ENCODE measurements at regions of chr6 and their contacts with region 1.

Region 1: DNA sequence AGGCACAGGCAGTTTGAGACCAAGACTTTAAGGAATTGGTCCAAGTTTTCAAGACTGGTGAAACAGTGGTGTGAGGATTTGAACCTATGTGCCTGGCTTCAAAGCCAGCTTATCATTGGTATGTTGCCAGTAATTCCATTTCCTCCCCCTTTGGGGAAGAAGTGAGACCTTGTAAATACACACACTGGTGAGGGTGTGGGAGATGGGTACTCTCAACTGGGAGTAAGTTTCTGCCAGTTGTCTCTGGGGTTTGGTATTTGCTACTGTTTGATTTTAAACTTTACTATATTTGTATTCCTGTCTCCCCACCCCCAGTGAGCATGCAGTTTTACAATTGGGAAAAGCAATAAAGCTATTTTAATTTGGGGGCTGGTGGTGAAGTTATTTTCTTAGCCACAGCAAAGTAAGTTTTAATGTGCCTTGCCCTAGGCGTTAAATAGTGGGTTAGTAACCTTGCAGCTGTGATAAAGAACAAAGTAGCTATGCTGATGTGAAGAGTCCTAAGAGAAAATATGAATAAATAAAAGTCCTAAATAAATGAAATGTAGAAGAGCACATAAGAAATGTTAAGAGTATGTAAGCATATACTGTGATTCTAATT is 31.0 kb downstream of the SNX9 start:
- DNase-seq: no peak
- H3K4me3 ChIP-seq: no peak overlapping the region
- H3K27me3 ChIP-seq: no peaks in the 10 kb centered on the region
- CTCF ChIP-seq: no peak

Region 2: GRCh38 chr6:157885211-157885788 is 31.3 kb after region 1 on chr6:
- CTCF ChIA-PET with region 1: no interaction called
- POLR2A ChIA-PET with region 1: interaction called, 12 read pairs
- DNase-seq: no peak
- H3K4me3 ChIP-seq: no peak overlapping the region
- H3K27me3 ChIP-seq: no peaks in the 10 kb centered on the region
- CTCF ChIP-seq: no peak

Measured in BJ (cell line).